ENCODE measurements at regions of chr7 and their contacts with region 1.

Region 1: GRCh38 chr7:50826371-50827172 is 43.9 kb upstream of the GRB10 start:
- DNase-seq: peak; percentile 33
- H3K4me3 Mint-ChIP-seq: peak overlapping the region; percentile 47
- H3K27ac Mint-ChIP-seq: peak overlapping the region; percentile 77
- H3K4me1 Mint-ChIP-seq: peaks cover 26% of the 10 kb centered on the region
- H3K27me3 Mint-ChIP-seq: peaks cover 9% of the 10 kb centered on the region

Region 2: GRCh38 chr7:50793115-50793946 is 33.2 kb before region 1 on chr7:
- intact Hi-C with region 1: loop called (anchors 5 kb)
- DNase-seq: peak; percentile 9
- H3K4me3 Mint-ChIP-seq: peak overlapping the region; percentile 67
- H3K27ac Mint-ChIP-seq: no peak overlapping the region
- H3K4me1 Mint-ChIP-seq: peaks cover 13% of the 10 kb centered on the region
- H3K27me3 Mint-ChIP-seq: peaks cover 76% of the 10 kb centered on the region

Region 3: GRCh38 chr7:50805447-50806119 is 21.0 kb before region 1 on chr7:
- intact Hi-C with region 1: loop called (anchors 2 kb)
- DNase-seq: no peak
- H3K4me3 Mint-ChIP-seq: no peak overlapping the region
- H3K27ac Mint-ChIP-seq: no peak overlapping the region
- H3K4me1 Mint-ChIP-seq: no peaks in the 10 kb centered on the region
- H3K27me3 Mint-ChIP-seq: peaks cover 16% of the 10 kb centered on the region

Measured in activated T-helper 1 cell treated with anti-CD3 and anti-CD28 coated beads, Interleukin-12 subunit alpha, Interleukin-12 subunit beta, Interleukin-2, Interleukin-4 antibody, amounts not matched to agents 30 ng/mL and 10 ng/mL and 1 ng/mL, durations not matched to agents 14 hours and 24 hours and 36 hours (primary cell).